Activated CD4-positive, alpha-beta T cell treated with anti-CD3 and anti-CD28 coated beads for 36 hours (primary cell): ENCODE measurements at regions of chrX and their contacts with region 1.

Region 1: DNA sequence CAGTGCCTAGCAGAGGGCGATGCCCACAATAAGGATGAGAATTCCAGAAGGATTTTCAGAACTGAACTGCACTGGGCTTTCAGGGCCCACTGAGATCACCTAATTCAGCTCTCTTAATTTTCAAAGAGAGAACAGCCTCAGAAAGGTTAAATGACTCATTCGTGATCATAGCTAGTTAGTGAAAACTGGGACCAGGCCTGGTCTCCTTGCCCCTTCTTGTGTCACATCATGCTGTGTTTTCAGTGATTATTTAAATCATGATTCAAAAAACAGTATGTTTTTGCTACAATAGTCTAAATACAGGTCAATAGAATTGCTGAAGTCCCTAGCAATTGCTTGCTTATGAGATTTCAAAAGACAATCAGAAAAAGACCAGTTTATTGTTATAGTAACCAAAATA is 136.4 kb upstream of the PLAC1 start:
- DNase-seq: peak; percentile 9
- ATAC-seq: no peak
- H3K4me3 Mint-ChIP-seq: peak overlapping the region; percentile 85
- H3K27ac Mint-ChIP-seq: no peak overlapping the region
- H3K4me1 Mint-ChIP-seq: peaks cover 33% of the 10 kb centered on the region
- H3K27me3 Mint-ChIP-seq: no peaks in the 10 kb centered on the region

Region 2: GRCh38 chrX:134807039-134807731 is 12.5 kb after region 1 on chrX:
- CTCF ChIA-PET with region 1: interaction called, 13 read pairs
- POLR2A ChIA-PET with region 1: no interaction called
- intact Hi-C with region 1: no loop called
- DNase-seq: peak; percentile 92
- ATAC-seq: peak; percentile 89
- H3K4me3 Mint-ChIP-seq: peak overlapping the region; percentile 82
- H3K27ac Mint-ChIP-seq: peak overlapping the region; percentile 96
- H3K4me1 Mint-ChIP-seq: peaks cover 23% of the 10 kb centered on the region
- H3K27me3 Mint-ChIP-seq: no peaks in the 10 kb centered on the region